Activated CD4-positive, alpha-beta T cell treated with anti-CD3 and anti-CD28 coated beads for 36 hours (primary cell): ENCODE measurements at regions of chr3 and their contacts with region 1.

Region 1: DNA sequence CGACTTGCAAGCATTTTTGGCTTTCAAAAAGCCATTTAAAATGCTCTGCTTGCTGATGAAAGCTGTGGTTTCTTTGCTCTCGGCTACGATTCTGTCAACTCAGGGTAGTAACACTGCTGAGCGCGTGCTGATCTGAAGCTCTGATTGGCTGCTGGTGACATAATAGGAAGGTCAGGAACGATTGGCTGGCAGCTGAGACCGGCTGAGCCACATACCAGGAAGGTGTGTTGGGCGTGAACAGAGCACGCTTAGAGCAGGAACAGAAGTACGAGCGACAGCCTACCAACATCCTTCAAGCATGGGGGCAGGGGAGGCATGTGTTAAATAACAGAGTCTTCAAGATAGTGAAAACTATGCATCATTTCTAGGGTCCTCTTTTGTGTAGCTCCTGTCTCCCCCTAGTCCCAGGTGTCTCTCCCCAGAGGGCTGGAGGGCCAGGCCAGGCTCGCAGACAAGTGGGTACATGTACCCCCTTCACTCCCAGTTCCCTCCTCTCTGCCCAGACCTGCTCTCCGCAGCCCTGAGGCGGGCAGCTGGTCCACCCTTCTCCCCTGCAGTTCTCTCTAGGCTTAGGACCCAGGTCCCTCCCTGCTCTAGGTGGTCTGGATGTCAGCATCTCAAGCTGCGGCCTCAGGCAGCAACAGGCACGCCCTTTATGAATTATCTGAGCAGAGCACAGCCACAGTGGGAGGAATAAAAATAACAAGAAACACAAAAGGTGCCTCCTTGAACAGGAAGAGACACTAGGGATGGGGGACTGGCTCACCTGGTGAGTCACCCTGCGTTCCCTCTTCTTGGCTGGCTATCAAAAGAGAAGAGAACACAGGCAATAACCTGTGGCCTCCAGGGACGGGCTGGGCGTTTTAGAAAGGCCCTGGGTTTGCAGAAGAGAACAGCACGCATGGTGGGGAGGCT is 76.0 kb downstream of the TAMM41 start:
- DNase-seq: peak; percentile 88
- ATAC-seq: peak; percentile 100
- H3K4me3 Mint-ChIP-seq: peak overlapping the region; percentile 13
- H3K27ac Mint-ChIP-seq: peak overlapping the region; percentile 75
- H3K4me1 Mint-ChIP-seq: peaks cover 20% of the 10 kb centered on the region
- H3K27me3 Mint-ChIP-seq: no peaks in the 10 kb centered on the region

Region 2: GRCh38 chr3:9793161-9793994 is 1977.4 kb before region 1 on chr3:
- CTCF ChIA-PET with region 1: no interaction called
- POLR2A ChIA-PET with region 1: no interaction called
- intact Hi-C with region 1: no loop called
- DNase-seq: peak; percentile 52
- ATAC-seq: peak; percentile 20
- H3K4me3 Mint-ChIP-seq: peak overlapping the region; percentile 99
- H3K27ac Mint-ChIP-seq: peak overlapping the region; percentile 100
- H3K4me1 Mint-ChIP-seq: peaks cover 70% of the 10 kb centered on the region
- H3K27me3 Mint-ChIP-seq: no peaks in the 10 kb centered on the region

Region 3: DNA sequence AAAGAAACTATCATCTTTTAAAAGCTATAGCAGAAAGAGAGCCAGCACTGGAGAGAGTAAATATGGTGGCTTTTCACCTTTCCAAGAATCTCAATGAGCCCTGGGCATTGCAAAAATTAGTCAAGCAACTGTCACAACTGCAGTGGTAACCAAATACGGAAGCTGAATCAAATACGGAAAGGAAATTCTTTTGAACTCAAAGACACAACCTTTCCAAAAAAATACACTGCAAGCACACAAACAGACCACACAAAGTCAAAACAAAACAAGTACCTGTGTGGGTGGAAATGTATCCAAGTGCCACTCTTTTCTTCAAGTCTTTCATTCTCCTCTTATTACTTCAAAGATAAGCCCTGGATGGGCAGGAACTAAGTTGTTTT is 144.7 kb before region 1 on chr3:
- CTCF ChIA-PET with region 1: no interaction called
- POLR2A ChIA-PET with region 1: no interaction called
- intact Hi-C with region 1: loop called in 1 of 2 experiments (anchors 5 kb)
- DNase-seq: peak; percentile 44
- ATAC-seq: peak; percentile 67
- H3K4me3 Mint-ChIP-seq: peak overlapping the region; percentile 26
- H3K27ac Mint-ChIP-seq: peak overlapping the region; percentile 66
- H3K4me1 Mint-ChIP-seq: peaks cover 67% of the 10 kb centered on the region
- H3K27me3 Mint-ChIP-seq: no peaks in the 10 kb centered on the region

Region 4: DNA sequence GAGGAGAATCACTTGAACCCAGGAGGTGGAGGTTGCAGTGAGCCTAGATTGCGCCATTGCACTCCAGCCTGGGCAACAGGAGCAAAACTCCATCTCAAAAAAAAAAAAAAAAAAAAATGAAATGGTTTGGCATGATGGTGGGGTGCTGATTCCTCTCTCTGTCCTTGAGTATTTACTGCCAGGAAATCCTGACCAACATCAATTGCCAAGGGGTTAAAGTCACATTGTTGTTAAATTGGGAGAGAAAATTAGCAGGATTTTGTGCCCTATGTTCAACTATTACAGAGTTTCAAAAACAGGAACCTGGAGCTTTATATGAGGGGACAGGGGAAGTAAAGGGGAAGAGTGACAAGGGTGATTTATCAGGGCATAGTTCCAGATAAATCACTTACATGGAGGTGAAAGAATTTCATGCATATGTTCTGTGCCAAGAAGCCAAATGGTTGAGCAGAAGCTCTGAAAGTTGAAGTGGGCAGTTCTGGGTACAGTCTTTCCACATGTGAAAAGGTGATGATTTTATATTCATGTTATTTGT is 643.1 kb after region 1 on chr3:
- CTCF ChIA-PET with region 1: no interaction called
- POLR2A ChIA-PET with region 1: no interaction called
- intact Hi-C with region 1: no loop called
- DNase-seq: no peak
- ATAC-seq: no peak
- H3K4me3 Mint-ChIP-seq: no peak overlapping the region
- H3K27ac Mint-ChIP-seq: no peak overlapping the region
- H3K4me1 Mint-ChIP-seq: peaks cover 13% of the 10 kb centered on the region
- H3K27me3 Mint-ChIP-seq: peaks cover 9% of the 10 kb centered on the region